ENCODE measurements at regions of chr20 and their contacts with region 1.

Region 1: GRCh38 chr20:50308513-50309279 is 118.1 kb downstream of the CEBPB start:
- DNase-seq: peak; percentile 96
- ATAC-seq: peak; percentile 15
- H3K4me3 ChIP-seq: peak overlapping the region; percentile 53 to 78 (median 61)
- H3K27ac ChIP-seq: peak overlapping the region; percentile 75
- H3K4me1 ChIP-seq: peaks cover 66% of the 10 kb centered on the region
- H3K27me3 ChIP-seq: no peaks in the 10 kb centered on the region
- CTCF ChIP-seq: peak; percentile 67
- EP300 ChIP-seq: peak in 1 of 2 experiments; percentile 62; a peak in 3 of 4 replicates
- POLR2A ChIP-seq: peak in 1 of 2 experiments; percentile 11; a peak in 2 of 4 replicates
- RAD21 ChIP-seq: peak; percentile 46

Region 2: GRCh38 chr20:50120897-50121693 is 187.6 kb before region 1 on chr20:
- CTCF ChIA-PET with region 1: no interaction called
- POLR2A ChIA-PET with region 1: interaction called, 3 read pairs
- in situ Hi-C with region 1: no loop called
- intact Hi-C with region 1: loop called (anchors 10 kb)
- DNase-seq: peak; percentile 84
- ATAC-seq: peak; percentile 91
- H3K4me3 ChIP-seq: peak overlapping the region; percentile 4 to 57 (median 22); a peak in 3 of 6 replicates
- H3K27ac ChIP-seq: peak overlapping the region; percentile 45
- H3K4me1 ChIP-seq: peaks cover 33% of the 10 kb centered on the region
- H3K27me3 ChIP-seq: no peaks in the 10 kb centered on the region
- CTCF ChIP-seq: peak; percentile 98
- EP300 ChIP-seq: no peak
- POLR2A ChIP-seq: no peak; a peak in 2 of 4 replicates
- RAD21 ChIP-seq: peak; percentile 99

Region 3: DNA sequence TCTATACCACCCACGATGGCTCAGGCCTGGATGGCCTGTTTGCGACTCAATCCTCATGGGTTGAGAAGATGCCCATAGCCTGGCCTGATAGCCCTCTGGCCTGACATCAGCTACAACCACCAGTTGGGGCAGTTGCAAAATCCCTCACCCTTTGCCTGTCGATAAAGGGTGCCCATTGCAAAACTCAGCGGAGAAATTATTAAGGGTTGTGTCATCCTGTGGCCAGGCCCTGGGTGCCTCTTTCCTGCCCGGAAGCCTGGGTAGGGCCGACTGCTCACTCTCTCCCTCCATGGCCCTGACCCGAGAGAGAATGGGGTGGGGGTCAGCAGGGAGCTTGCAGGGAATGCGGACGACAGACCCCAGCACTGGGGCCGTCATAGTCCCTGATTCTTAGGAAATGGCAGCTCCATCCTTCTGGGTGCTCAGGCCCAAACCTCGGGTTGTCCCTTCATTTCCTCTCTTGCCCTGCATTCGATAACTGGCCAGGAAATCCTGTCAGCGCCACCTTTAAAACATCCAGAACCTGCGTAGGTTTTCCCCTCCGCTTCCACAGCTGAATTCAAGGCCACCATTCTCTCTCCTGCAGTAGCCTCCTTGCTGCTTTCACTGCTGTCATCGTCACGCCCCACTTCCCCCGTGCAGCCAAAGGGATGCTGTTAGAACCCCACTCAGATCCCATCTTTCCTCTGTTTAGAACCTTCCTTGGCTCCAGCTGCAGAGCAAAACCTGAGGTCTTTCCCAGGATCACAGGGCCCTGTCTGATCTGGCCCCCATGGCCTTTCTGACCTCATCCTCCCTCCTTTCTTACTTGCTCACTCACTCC is 87.0 kb before region 1 on chr20:
- CTCF ChIA-PET with region 1: no interaction called
- POLR2A ChIA-PET with region 1: no interaction called
- in situ Hi-C with region 1: no loop called
- intact Hi-C with region 1: no loop called
- DNase-seq: no peak
- ATAC-seq: no peak
- H3K4me3 ChIP-seq: no peak overlapping the region; a peak in 1 of 6 replicates
- H3K27ac ChIP-seq: no peak overlapping the region
- H3K4me1 ChIP-seq: peaks cover 80% of the 10 kb centered on the region
- H3K27me3 ChIP-seq: peaks cover 5 to 43% of the 10 kb centered on the region in 2 experiments; a peak in 4 of 5 replicates
- CTCF ChIP-seq: no peak
- EP300 ChIP-seq: no peak
- POLR2A ChIP-seq: no peak
- RAD21 ChIP-seq: no peak

Region 4: GRCh38 chr20:50237349-50238085 is 71.2 kb before region 1 on chr20:
- CTCF ChIA-PET with region 1: no interaction called
- POLR2A ChIA-PET with region 1: no interaction called
- in situ Hi-C with region 1: no loop called
- intact Hi-C with region 1: no loop called
- DNase-seq: peak; percentile 75
- ATAC-seq: peak; percentile 47
- H3K4me3 ChIP-seq: no peak overlapping the region
- H3K27ac ChIP-seq: no peak overlapping the region
- H3K4me1 ChIP-seq: peaks cover 66% of the 10 kb centered on the region
- H3K27me3 ChIP-seq: peaks cover 10 to 53% of the 10 kb centered on the region in 2 experiments; a peak in 4 of 5 replicates
- CTCF ChIP-seq: no peak
- EP300 ChIP-seq: peak in 1 of 2 experiments; percentile 23; a peak in 1 of 4 replicates
- POLR2A ChIP-seq: no peak
- RAD21 ChIP-seq: no peak

Region 5: DNA sequence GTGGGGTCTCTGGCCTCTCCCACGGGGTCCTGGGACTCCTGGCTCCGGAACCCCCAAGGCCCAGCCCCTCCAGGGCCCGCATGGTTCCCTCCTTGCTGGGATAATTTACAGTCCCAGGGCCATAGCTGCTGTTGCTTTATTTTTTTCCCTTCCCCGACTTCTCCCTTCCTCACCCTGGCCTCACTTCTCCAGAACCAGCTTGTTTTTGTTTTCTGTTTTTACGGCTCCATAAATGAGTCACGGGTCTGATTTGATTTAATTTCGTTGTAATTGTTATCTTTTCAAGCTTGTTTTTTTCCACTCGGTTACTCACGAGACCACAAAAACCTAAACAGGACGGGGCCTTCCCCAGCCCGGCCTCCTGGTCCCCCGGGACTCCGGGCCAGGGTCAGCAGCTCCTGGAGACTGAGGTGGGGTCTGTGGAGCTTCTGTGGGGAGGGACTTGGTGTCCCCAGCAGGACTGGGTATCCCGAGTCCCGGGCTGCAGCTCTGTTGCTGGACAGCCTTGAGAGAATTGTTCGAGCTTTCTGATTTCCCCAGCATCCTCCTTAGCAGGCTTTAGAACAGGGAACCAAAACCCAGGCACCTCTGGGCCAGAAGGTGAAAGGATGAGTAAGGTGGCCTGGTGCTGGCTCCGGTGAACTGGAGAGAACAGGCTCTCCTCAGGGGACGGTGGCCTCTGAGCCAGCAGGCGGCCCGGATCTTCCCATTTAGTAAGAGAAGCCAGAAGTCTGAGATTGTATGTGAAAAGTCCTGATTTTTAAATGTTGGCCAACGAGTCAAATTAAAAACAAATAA is 23.1 kb before region 1 on chr20:
- CTCF ChIA-PET with region 1: no interaction called
- POLR2A ChIA-PET with region 1: interaction called, 178 read pairs
- in situ Hi-C with region 1: no loop called
- intact Hi-C with region 1: no loop called
- DNase-seq: no peak
- ATAC-seq: no peak
- H3K4me3 ChIP-seq: no peak overlapping the region
- H3K27ac ChIP-seq: no peak overlapping the region
- H3K4me1 ChIP-seq: peaks cover 66% of the 10 kb centered on the region
- H3K27me3 ChIP-seq: no peaks in the 10 kb centered on the region
- CTCF ChIP-seq: no peak
- EP300 ChIP-seq: no peak
- POLR2A ChIP-seq: no peak
- RAD21 ChIP-seq: no peak

Region 6: DNA sequence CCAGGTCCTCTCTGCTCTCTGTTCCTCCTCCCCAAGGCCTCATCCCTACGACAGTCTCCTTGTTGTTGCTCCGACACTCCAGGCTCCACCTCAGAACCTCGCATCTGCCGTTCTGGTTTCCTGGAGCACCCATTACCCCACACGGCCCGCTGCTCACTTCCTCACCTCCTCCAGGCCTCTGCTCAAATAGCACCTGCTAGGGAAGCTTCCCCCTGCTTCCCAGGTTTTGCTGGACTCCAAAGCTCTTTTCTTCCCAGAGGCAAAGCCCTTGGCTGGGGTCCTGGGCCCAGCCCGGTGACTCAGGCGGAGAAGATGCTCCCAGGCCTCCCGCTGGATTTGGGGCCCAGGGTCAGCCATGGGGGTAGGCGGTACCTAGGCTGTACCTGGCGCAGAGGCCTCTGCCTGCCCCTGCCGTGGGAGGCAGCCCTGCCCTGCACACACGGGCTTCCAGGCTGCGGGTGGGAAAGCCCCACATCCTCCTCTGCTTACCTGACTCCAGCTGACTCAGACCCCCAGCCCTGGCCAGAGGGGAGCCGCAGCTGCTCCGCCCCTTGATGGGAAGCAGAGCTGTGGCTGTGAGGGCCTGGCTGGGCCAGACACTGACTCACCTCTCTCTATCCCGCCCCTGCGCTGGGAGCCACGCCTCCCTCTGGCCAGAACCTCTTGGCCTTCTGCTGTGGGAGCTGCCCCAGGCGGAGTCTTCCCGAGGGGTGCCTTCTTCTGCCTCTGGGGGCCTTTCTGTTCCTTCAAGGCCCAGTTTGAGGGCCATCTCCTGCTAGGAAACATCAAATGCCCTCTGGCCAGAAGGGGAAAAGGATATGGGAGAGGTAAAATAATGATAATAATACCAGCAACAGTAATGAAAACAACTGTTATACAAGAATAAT is 12.5 kb after region 1 on chr20:
- CTCF ChIA-PET with region 1: no interaction called
- POLR2A ChIA-PET with region 1: interaction called, 164 read pairs
- in situ Hi-C with region 1: no loop called
- intact Hi-C with region 1: loop called (anchors 2 kb)
- DNase-seq: peak; percentile 85
- ATAC-seq: peak; percentile 95
- H3K4me3 ChIP-seq: peak overlapping the region; percentile 54 to 87 (median 62)
- H3K27ac ChIP-seq: peak overlapping the region; percentile 11
- H3K4me1 ChIP-seq: peaks cover 56% of the 10 kb centered on the region
- H3K27me3 ChIP-seq: no peaks in the 10 kb centered on the region; a peak in 2 of 5 replicates
- CTCF ChIP-seq: peak; percentile 59
- EP300 ChIP-seq: peak; percentile 18 to 47; a peak in 2 of 4 replicates
- POLR2A ChIP-seq: peak; percentile 16 to 86; a peak in 3 of 4 replicates
- RAD21 ChIP-seq: peak; percentile 49; the same call in 1 of the 2 replicates

Region 7: DNA sequence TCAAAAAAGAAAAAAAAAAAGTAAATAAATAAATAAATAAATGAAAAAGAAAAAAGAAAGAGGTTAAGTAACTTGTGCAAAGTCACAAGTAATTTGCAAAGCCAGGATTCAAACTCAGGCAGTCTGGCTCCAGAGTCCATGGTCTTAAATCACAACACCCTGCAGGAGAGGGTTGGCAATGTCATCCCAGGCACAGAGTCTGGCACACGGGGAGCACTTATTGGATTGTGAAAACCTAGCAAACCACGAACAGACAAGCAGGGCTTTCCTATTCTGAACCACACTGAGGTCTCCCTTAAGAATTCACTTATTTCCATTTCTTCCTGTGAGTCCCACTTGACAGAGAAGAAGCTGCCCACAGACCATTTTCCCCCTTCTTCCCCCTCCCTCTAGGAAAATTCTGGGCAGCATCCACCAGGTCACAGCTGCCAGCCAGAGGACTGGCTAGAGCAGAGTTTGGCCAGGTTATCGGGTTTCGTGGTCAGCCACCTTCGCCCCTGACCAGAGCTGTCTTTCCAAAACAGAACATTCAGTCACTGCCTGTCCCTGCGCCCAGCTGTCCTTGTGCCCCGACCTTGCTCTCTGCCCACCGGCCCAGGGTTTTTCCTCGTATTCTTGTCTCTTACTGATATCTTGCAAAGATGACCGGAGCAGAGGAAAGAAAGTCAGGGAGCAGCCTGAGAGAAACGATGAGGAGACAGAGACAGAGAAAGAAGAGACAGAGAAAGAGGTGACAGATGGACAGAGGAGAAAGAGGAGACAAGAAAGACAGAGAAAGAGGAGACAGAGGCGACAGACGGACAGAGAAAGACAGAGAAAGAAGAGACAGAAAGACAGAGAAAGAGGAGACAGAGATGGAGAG is 95.1 kb after region 1 on chr20:
- CTCF ChIA-PET with region 1: no interaction called
- POLR2A ChIA-PET with region 1: interaction called, 78 read pairs
- in situ Hi-C with region 1: no loop called
- intact Hi-C with region 1: loop called (anchors 1 kb)
- DNase-seq: no peak
- ATAC-seq: no peak
- H3K4me3 ChIP-seq: no peak overlapping the region
- H3K27ac ChIP-seq: peak overlapping the region; percentile 85
- H3K4me1 ChIP-seq: peaks cover 100% of the 10 kb centered on the region
- H3K27me3 ChIP-seq: no peaks in the 10 kb centered on the region
- CTCF ChIP-seq: no peak
- EP300 ChIP-seq: 0 out of 4 replicates have a peak, but pooled peaks of 1 of the 2 experiments have one; percentile 7
- POLR2A ChIP-seq: no peak
- RAD21 ChIP-seq: no peak